ENCODE measurements at regions of chr1 and their contacts with region 1.

Region 1: DNA sequence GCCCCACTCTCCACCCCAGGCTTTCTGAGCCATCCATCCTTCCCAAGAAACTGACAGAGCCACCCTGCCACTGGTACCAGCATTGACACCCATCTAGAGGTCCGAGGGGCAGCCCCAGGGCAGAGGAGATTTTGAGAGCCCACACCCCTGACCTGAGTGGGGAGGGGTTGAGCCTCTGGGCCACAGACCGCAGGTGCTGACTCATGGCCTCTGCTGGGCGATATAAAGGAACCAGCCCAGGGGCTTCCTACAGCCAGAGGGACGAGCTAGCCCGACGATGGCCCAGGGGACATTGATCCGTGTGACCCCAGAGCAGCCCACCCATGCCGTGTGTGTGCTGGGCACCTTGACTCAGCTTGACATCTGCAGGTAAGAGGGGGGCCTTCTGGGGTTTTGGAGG is at the start of gene PADI4:
- DNase-seq: no peak
- H3K4me3 ChIP-seq: no peak within 1 kb of the TSS
- H3K27ac ChIP-seq: no peak within 1 kb of the TSS
- H3K4me1 ChIP-seq: no peaks in the 10 kb centered on the region
- H3K27me3 ChIP-seq: no peaks in the 10 kb centered on the region
- CTCF ChIP-seq: no peak
- total RNA-seq, gene PADI4: not detected in 2 replicates

Region 2: DNA sequence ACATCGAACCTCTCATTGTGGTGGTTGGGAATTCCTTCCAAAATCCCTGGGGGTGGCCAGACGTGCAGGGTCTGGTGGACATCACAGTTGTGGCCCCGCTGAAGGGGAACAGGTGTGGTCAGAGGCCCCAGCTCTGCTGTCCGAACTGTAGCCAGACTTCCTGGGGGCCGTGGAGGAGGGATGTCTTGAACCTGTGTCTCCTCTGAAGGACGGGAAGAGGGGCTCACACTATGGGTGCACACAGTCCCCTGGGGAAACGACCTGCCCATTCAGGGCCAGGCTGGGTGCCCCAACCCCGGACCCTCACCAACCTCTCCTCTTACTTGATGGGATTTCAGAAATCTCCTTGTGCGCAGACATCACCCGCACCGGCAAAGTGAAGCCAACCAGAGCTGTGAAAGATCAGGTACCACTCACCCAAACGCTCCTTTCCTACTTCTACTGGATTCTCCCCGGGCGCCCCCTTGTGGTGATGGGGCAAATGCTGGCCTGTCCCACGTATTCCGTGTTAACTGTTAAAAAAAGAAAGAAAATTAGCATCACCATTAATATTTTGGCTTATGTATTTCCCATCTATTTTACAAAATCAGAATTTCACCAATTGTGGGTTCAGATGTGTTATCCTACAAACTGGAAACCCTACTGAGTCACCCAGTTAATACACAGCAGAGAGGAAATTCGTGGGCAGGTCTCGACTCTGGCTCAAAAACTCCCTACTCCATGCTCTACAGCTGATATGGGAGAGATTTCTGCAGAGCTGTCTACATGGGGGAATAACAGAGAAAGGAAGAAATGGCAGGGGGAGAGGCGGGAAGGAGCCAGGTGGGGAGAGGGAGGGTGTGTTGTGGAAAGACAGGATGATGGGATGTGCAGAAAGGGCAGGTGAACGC is 28.1 kb after region 1 on chr1:
- CTCF ChIA-PET with region 1: no interaction called
- POLR2A ChIA-PET with region 1: interaction called, 10 read pairs
- intact Hi-C with region 1: no loop called
- DNase-seq: peak; percentile 82
- H3K4me3 ChIP-seq: no peak overlapping the region
- H3K27ac ChIP-seq: no peak overlapping the region
- H3K4me1 ChIP-seq: no peaks in the 10 kb centered on the region
- H3K27me3 ChIP-seq: no peaks in the 10 kb centered on the region
- CTCF ChIP-seq: peak; percentile 97